Activated T-helper 1 cell treated with anti-CD3 and anti-CD28 coated beads, Interleukin-12 subunit alpha, Interleukin-12 subunit beta, Interleukin-2, Interleukin-4 antibody, amounts not matched to agents 30 ng/mL and 10 ng/mL and 1 ng/mL, durations not matched to agents 14 hours and 24 hours and 36 hours (primary cell): ENCODE measurements at regions of chrX and their contacts with region 1.

Region 1: GRCh38 chrX:120790118-120790517 is 85.5 kb downstream of the CT47B1 start:
- DNase-seq: peak; percentile 1
- H3K4me3 Mint-ChIP-seq: peak overlapping the region; percentile 25
- H3K27ac Mint-ChIP-seq: peak overlapping the region; percentile 56
- H3K4me1 Mint-ChIP-seq: peaks cover 21% of the 10 kb centered on the region
- H3K27me3 Mint-ChIP-seq: no peaks in the 10 kb centered on the region

Region 2: GRCh38 chrX:120857240-120857639 is 67.1 kb after region 1 on chrX:
- intact Hi-C with region 1: loop called (anchors 2 kb)
- DNase-seq: no peak
- H3K4me3 Mint-ChIP-seq: no peak overlapping the region
- H3K27ac Mint-ChIP-seq: no peak overlapping the region
- H3K4me1 Mint-ChIP-seq: peaks cover 19% of the 10 kb centered on the region
- H3K27me3 Mint-ChIP-seq: peaks cover 2% of the 10 kb centered on the region

Region 3: GRCh38 chrX:121000587-121000986 is 210.5 kb after region 1 on chrX:
- intact Hi-C with region 1: loop called (anchors 1 kb)
- DNase-seq: no peak
- H3K4me3 Mint-ChIP-seq: no peak overlapping the region
- H3K27ac Mint-ChIP-seq: no peak overlapping the region
- H3K4me1 Mint-ChIP-seq: no peaks in the 10 kb centered on the region
- H3K27me3 Mint-ChIP-seq: no peaks in the 10 kb centered on the region

Region 4: GRCh38 chrX:121504148-121504547 is 714.0 kb after region 1 on chrX:
- intact Hi-C with region 1: loop called (anchors 10 kb)
- DNase-seq: no peak
- H3K4me3 Mint-ChIP-seq: no peak overlapping the region
- H3K27ac Mint-ChIP-seq: no peak overlapping the region
- H3K4me1 Mint-ChIP-seq: no peaks in the 10 kb centered on the region
- H3K27me3 Mint-ChIP-seq: no peaks in the 10 kb centered on the region

Region 5: DNA sequence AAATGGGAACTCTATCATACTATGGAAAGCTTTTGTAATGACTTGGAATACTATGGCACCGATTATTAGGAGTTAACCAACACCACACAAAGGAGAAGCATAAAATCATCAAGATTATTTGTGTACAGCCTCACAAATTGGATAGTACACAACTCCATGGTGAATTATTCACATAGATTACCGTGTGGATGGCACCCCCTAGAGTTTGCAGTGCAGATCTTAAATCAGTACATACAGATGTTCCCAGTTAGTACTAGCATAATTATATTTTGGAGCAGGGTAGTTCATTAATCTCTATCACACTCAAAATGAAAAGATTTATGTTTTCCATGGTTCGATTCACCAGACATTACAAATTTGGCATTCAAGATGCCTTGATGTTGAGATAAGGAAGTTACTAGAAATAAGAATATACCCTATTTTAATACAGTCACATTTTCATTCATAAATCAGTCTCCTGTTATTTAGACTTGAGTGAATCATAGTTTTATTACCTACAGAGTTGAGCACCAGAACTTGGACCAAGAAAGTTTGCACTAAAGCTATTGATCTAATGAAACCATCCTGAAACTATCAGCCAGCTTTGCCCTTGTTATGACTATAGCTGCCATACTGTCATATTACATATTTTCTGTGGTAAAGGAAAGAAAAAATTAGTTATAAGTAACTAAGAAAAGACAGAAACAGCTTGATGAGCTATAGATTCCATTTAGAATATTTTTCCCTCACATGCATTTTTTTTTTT is 789.1 kb after region 1 on chrX:
- intact Hi-C with region 1: loop called (anchors 1 kb)
- DNase-seq: no peak
- H3K4me3 Mint-ChIP-seq: no peak overlapping the region
- H3K27ac Mint-ChIP-seq: peak overlapping the region; percentile 61
- H3K4me1 Mint-ChIP-seq: no peaks in the 10 kb centered on the region
- H3K27me3 Mint-ChIP-seq: no peaks in the 10 kb centered on the region